ENCODE measurements at regions of chr3 and their contacts with region 1.

Region 1: DNA sequence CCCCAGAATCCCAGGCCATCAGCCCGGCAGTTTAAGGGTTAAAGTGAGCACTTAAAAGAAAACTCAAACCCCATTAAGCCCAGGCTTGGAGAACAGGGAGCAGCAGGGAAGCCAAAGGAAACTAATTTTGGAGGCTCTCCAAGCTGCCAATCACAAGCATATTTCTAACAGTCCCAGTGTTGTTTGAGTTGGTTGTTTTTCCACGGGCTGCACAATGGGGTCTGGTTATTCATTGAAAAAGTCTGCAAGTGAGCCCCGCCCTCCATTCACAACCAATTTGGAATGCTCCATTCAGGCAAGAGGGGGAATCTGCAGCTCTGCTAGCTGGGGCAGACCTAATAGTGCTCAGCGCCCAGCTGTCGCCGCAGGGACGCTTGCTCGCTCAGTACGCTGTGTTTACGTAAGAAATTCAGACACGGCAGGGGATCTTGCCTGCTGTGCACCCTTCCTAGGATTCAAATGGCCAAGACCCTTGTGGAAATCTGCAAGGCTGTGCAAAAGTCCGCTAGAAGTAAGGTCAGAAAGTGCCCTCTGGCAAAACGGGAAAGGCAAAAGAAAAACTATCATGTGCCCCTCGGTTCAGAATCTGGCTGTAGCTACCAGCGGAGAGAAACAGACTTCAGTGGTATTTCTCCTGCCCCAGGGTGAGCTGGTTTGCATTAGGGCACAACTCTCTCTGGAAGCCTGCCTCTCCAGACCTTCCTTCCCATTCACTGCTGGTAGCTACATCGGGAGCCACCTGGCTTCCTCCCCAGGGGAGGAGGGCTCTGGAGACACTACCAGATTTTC is 11.0 kb downstream of the ETV5 start:
- DNase-seq: peak; percentile 11
- ATAC-seq: peak; percentile 60
- H3K4me3 Mint-ChIP-seq: no peak overlapping the region
- H3K27ac Mint-ChIP-seq: no peak overlapping the region
- H3K4me1 Mint-ChIP-seq: peaks cover 3% of the 10 kb centered on the region
- H3K27me3 Mint-ChIP-seq: peaks cover 62% of the 10 kb centered on the region

Region 2: DNA sequence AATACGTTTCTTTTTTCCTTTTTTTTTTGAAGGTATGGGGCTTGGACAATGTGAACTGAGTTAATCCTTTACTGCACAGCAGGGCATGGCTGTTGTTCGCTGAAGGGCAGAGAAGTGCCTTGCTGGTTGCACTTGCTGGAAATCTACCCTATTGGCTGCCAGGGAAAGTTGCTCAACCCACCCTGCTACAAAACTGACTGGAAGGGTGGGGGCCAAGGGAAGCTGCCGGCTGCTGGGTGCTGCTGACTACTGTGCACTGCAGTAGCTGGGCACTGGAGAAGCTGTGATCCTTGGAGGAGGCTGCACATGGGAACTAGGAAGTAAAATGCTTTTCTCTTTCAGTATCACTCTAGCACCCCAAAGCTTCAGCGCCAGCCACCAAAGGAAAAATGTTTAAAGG is 59.5 kb before region 1 on chr3:
- CTCF ChIA-PET with region 1: no interaction called
- POLR2A ChIA-PET with region 1: no interaction called
- intact Hi-C with region 1: loop called in 1 of 2 experiments (anchors 2 kb)
- DNase-seq: no peak
- ATAC-seq: no peak
- H3K4me3 Mint-ChIP-seq: no peak overlapping the region
- H3K27ac Mint-ChIP-seq: no peak overlapping the region
- H3K4me1 Mint-ChIP-seq: no peaks in the 10 kb centered on the region
- H3K27me3 Mint-ChIP-seq: peaks cover 12% of the 10 kb centered on the region

Region 3: DNA sequence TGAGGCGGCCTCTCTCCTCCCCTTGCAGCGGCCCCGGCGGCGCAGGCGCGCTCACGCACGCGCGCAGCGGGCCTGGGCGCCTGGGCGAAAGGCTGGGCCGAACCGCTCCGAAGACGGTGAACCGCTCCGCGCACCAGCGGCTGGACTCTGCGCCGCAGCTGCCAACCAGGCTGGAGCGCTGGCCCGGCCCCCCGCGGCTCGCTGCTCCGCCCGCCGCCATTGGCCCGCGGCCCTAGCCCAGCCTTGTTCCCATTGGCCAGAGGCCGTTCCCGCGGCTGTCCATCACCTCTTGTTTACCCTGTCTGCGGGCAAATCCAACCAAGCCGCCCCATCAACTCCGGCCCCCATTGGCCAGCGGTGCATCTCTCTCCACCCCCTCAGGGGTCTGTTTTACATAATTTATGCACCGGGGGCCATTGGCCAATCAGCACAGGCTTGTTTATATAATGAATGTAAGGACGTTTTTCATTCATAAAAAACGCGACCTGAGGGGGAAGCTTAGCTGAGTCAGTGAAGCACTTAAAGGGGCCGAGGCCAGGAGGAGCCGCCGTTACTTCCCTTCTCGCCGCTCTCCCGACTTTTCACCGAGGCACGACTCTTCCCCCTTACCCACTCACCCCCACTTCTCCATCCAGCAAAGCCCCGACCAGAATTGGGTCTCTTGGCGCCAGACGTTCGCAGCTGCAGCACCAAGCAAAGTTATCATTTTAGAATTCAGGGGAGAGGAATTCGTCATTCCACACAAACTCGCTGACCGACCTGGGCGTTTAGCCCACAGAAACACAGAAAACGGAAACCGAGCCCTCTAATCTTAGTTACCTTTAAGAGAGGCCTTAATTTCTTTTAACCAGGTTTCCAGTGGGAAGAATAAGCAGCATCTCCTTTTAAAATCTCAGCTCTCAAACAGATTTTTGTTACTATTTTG is 11.3 kb after region 1 on chr3 and contains the start of gene ETV5:
- CTCF ChIA-PET with region 1: no interaction called
- POLR2A ChIA-PET with region 1: no interaction called
- intact Hi-C with region 1: no loop called
- DNase-seq: peak; percentile 96
- ATAC-seq: peak; percentile 96
- H3K4me3 Mint-ChIP-seq: peak within 1 kb of the TSS; percentile 73
- H3K27ac Mint-ChIP-seq: peak within 1 kb of the TSS; percentile 42
- H3K4me1 Mint-ChIP-seq: peaks cover 34% of the 10 kb centered on the region
- H3K27me3 Mint-ChIP-seq: peaks cover 69% of the 10 kb centered on the region
- total RNA-seq, gene ETV5: 0.83 to 1.4 TPM